ENCODE measurements at regions of chr7 and their contacts with region 1.

Region 1: GRCh38 chr7:80078159-80078731 is 56.4 kb upstream of the GNAI1 start:
- DNase-seq: peak; percentile 56
- H3K4me3 Mint-ChIP-seq: peak overlapping the region; percentile 75
- H3K27ac Mint-ChIP-seq: peak overlapping the region; percentile 55
- H3K4me1 Mint-ChIP-seq: peaks cover 10% of the 10 kb centered on the region
- H3K27me3 Mint-ChIP-seq: no peaks in the 10 kb centered on the region

Region 2: GRCh38 chr7:80218723-80219122 is 140.5 kb after region 1 on chr7:
- intact Hi-C with region 1: loop called (anchors 5 kb)
- DNase-seq: no peak
- H3K4me3 Mint-ChIP-seq: no peak overlapping the region
- H3K27ac Mint-ChIP-seq: no peak overlapping the region
- H3K4me1 Mint-ChIP-seq: peaks cover 9% of the 10 kb centered on the region
- H3K27me3 Mint-ChIP-seq: no peaks in the 10 kb centered on the region

Region 3: GRCh38 chr7:80231707-80232106 is 153.5 kb after region 1 on chr7:
- intact Hi-C with region 1: loop called (anchors 2 kb)
- DNase-seq: no peak
- H3K4me3 Mint-ChIP-seq: no peak overlapping the region
- H3K27ac Mint-ChIP-seq: no peak overlapping the region
- H3K4me1 Mint-ChIP-seq: no peaks in the 10 kb centered on the region
- H3K27me3 Mint-ChIP-seq: peaks cover 8% of the 10 kb centered on the region